Posterior vena cava (tissue), 2 donors: ENCODE measurements at regions of chr6 and their contacts with region 1.

Region 1: GRCh38 chr6:32785781-32786533 is 22.6 kb upstream of the HLA-DQB2 start:
- DNase-seq: no peak

Region 2: DNA sequence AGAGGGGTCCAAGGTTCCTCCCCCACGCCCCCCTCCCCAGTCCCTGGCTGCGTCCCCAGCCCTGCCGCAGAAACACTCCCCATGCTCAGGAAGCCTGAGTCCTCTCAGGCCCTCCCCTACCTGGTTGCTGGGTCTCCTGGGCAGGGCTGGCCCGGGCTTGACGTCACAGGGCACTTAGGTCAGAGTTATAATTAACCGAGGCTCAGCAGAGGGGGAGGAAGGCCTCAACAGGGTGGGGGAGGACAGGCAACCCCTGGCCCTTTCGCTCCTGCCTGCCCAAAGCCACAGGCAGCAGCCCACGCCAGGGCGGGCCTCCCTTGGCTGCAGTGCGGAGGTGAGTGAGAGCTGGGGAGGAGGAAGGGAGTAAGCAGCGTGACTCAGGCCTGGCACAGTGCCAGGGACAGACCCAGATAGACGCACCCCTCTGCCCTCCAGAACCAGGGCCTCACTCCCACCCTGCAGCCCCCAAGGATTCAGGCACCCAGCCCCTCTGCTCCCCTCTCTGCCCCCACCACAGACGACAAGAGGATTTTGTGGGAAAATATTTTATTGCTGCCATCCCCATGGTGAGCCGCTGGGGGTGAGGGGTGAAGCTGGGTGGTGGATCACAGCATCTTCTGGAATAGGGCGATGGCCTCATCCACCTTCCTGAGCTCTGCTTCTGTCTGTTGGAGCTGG is 1008.8 kb before region 1 on chr6 and contains the start of gene VWA7:
- intact Hi-C with region 1: loop called in 1 of 2 experiments (anchors 10 kb)
- DNase-seq: peak; percentile 90
- total RNA-seq, gene VWA7: 0.37 to 0.48 TPM

Region 3: DNA sequence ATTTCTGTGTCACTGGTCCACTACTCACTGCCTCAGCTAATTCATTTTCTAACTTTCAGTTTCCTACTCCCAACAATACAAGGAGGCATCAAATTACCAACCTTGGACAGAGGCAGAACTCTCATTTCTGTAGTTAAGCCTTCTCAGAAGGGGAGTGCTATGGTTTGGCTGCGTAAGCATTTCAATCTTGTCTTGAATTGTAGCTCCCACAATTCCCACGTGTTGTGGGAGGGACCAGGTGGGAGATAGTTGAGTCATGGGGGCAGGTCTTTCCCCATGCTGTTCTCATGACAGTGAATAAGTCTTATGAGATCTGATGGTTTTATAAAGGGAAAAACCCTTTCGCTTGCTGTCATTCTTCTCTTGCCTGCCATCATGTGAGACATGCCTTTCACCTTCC is 323.3 kb before region 1 on chr6:
- intact Hi-C with region 1: no loop called
- DNase-seq: no peak